ENCODE measurements at regions of chr2 and their contacts with region 1.

Region 1: GRCh38 chr2:109715313-109715805 is 78.7 kb upstream of the RGPD5 start:
- DNase-seq: peak; percentile 47
- ATAC-seq: peak; percentile 90

Region 2: GRCh38 chr2:109304731-109305470 is 410.5 kb before region 1 on chr2:
- intact Hi-C with region 1: no loop called
- DNase-seq: no peak
- ATAC-seq: no peak

Region 3: GRCh38 chr2:109545828-109546713 is 169.3 kb before region 1 on chr2:
- intact Hi-C with region 1: loop called (anchors 5 kb)
- DNase-seq: peak; percentile 80
- ATAC-seq: peak; percentile 95

Measured in Right ventricle myocardium superior (tissue), 1 donor.